AG04450 (cell line): ENCODE measurements at regions of chr5 and their contacts with region 1.

Region 1: GRCh38 chr5:43389679-43390329 is 22.4 kb downstream of the CCL28 start:
- DNase-seq: peak; percentile 75
- H3K4me3 ChIP-seq: no peak overlapping the region
- H3K27ac ChIP-seq: no peak overlapping the region
- H3K27me3 ChIP-seq: no peaks in the 10 kb centered on the region
- CTCF ChIP-seq: peak; percentile 88

Region 2: DNA sequence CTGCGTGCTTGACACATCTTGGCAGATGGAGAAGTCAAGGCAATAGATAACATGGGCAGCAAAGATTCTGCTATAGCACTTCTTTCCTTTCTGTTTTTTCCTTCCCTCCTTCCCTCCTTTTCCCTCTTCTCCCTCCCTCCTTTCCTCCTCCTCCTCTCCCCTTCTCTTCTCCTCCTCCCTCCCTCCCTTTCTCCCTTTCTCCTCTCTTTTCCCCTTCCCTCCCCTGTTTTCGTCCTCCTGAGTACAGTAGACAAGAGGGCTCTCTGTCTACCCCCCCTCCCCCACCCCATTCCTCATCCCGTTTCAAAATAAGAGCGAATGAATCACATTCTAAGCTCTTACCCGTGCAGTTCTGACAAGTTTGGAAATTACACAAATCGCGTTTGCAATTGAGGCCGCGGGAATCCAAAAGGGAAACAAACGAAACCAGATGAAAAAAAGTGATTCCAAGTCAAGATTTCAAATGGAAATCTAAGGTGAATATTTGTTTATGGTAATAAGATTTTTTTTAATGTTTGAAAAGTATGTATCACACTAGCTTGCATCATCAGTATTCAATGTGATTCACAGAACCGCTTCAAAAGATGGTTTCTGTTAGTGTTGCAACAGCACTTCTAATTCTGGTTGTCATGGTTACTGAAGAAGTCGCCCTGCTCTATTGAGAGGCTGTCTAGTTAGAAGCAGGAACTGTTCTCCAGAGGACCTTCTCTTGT is 196.5 kb before region 1 on chr5:
- CTCF ChIA-PET with region 1: interaction called, 10 read pairs
- POLR2A ChIA-PET with region 1: no interaction called
- DNase-seq: peak; percentile 72
- H3K4me3 ChIP-seq: peak overlapping the region; percentile 67
- H3K27ac ChIP-seq: peak overlapping the region; percentile 54
- H3K27me3 ChIP-seq: no peaks in the 10 kb centered on the region
- CTCF ChIP-seq: no peak

Region 3: DNA sequence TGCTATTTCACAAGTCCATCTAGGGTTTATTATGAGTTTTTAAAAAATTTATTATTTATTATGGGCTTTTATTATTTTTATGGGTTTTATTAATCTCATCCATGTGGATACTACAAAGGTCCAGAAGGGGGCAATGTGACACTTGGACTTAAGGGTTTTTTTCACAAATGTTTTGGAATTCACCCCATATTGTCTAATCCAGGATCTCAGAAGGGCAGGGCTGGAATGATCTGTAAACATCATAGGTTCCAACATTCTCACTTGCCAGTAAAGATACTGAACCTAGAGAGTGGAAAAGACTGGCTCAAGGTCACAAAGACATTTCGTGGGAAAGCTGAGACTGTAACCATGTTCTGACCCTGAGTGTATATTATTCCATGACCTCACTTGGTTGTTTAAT is 162.1 kb before region 1 on chr5:
- CTCF ChIA-PET with region 1: interaction called, 27 read pairs
- POLR2A ChIA-PET with region 1: no interaction called
- DNase-seq: peak; percentile 21
- H3K4me3 ChIP-seq: no peak overlapping the region
- H3K27ac ChIP-seq: no peak overlapping the region
- H3K27me3 ChIP-seq: no peaks in the 10 kb centered on the region
- CTCF ChIP-seq: peak; percentile 53

Region 4: GRCh38 chr5:43332396-43332795 is 57.4 kb before region 1 on chr5:
- CTCF ChIA-PET with region 1: no interaction called
- POLR2A ChIA-PET with region 1: no interaction called
- DNase-seq: no peak
- H3K4me3 ChIP-seq: no peak overlapping the region
- H3K27ac ChIP-seq: no peak overlapping the region
- H3K27me3 ChIP-seq: peaks cover 2% of the 10 kb centered on the region
- CTCF ChIP-seq: no peak

Region 5: GRCh38 chr5:43376496-43377140 is 13.2 kb before region 1 on chr5:
- CTCF ChIA-PET with region 1: interaction called, 21 read pairs
- POLR2A ChIA-PET with region 1: no interaction called
- DNase-seq: no peak
- H3K4me3 ChIP-seq: no peak overlapping the region
- H3K27ac ChIP-seq: no peak overlapping the region
- H3K27me3 ChIP-seq: no peaks in the 10 kb centered on the region
- CTCF ChIP-seq: no peak

Region 6: GRCh38 chr5:43461066-43461465 is 71.3 kb after region 1 on chr5:
- CTCF ChIA-PET with region 1: no interaction called
- POLR2A ChIA-PET with region 1: no interaction called
- DNase-seq: no peak
- H3K4me3 ChIP-seq: no peak overlapping the region
- H3K27ac ChIP-seq: no peak overlapping the region
- H3K27me3 ChIP-seq: no peaks in the 10 kb centered on the region
- CTCF ChIP-seq: no peak

Region 7: DNA sequence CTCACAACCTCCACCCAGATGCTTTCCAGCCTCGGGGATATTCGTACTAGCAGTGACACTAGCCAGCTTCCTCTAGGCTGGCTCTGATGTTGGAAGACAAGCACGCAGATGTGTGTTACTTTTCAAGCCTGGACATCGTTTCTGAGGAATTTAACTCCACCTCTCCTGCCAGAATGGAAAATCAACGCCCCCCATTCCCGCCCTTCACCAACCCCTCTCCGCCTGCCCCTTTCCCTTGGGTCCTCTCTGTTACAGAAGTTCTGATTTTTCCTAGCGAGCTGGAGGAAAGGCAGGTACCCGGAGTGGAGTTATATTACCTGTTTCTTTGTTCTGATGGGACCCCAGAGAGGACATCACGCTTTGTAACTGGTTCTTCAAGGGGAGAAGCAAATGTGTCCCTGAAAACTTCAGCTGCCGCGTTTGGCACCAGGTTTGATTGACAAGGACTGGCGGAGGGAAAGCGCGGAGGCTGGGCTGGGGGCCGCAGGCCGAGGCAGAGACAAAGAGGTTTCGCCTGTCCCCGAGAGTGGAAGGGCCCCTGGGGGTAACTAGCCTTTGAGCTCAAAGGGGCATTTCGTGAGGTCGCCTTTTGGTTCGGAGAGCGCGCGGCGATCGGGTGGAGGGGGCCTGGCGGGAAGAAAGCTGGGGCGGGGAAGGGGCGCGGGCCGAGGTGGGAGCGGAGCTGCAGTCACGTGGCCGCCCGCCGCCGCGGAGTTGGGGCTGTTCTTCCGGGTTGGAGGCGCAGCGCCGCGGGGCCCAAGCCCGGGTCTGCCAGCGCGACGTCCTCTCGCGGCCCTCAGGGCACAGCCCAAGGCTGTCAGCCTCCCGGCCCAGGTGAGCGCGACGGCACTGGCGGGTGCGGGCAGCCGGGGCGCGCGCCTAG is 212.9 kb after region 1 on chr5 and contains the start of gene NNT:
- CTCF ChIA-PET with region 1: no interaction called
- POLR2A ChIA-PET with region 1: no interaction called
- DNase-seq: no peak
- H3K4me3 ChIP-seq: peak within 1 kb of the TSS; percentile 70
- H3K27ac ChIP-seq: peak within 1 kb of the TSS; percentile 63
- H3K27me3 ChIP-seq: no peaks in the 10 kb centered on the region
- CTCF ChIP-seq: no peak
- polyA plus RNA-seq, gene NNT: 55.4 and 64.6 TPM in 2 replicates